CD4-positive, alpha-beta T cell (primary cell): ENCODE measurements at regions of chr16 and their contacts with region 1.

Region 1: DNA sequence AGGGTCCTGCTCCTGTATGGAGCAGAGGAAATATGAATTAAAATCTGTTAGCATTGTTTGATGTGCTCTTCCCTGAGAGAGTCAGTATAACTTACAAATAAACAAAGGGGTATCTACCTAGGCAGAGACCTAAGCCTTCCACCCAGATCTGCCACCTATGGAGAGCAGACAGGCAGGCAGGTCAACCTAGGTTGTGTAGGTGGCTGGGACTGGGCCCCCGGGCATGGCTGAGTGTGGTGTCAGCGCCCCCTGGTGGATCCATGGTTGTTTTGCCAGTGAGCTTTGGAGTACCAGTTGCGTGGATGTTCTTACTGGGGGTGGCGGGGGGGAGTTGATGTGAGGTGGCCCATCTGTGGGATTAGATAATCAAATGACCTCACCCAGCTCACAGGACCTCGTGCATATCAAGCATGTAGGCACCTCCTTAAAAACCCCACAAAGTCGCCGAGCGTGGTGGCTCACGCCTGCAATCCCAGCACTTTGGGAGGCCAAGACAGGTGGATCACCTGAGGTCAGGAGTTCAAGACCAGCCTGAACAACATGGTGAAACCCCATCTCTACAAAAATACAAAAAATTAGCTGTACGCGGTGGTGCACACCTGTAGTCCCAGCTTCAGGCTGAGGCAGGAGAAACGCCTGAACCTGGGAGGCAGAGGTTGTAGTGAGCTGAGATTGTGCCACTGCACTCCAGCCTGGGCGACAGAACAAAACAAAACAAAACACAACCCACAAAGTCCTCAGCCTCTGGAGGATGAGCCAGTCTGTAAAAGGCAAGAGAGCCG is 17.6 kb downstream of the DUS2 start:
- DNase-seq: peak; percentile 83 to 96 (median 91)
- ATAC-seq: peak; percentile 98
- H3K4me3 ChIP-seq: no peak overlapping the region
- H3K4me3 Mint-ChIP-seq: no peak overlapping the region
- H3K27ac ChIP-seq: no peak overlapping the region
- H3K27ac Mint-ChIP-seq: peak overlapping the region; percentile 57
- H3K4me1 ChIP-seq: peaks cover 14% of the 10 kb centered on the region
- H3K4me1 Mint-ChIP-seq: peaks cover 11% of the 10 kb centered on the region
- H3K27me3 ChIP-seq: no peaks in the 10 kb centered on the region
- H3K27me3 Mint-ChIP-seq: no peaks in the 10 kb centered on the region
- CTCF ChIP-seq: peak; percentile 82

Region 2: DNA sequence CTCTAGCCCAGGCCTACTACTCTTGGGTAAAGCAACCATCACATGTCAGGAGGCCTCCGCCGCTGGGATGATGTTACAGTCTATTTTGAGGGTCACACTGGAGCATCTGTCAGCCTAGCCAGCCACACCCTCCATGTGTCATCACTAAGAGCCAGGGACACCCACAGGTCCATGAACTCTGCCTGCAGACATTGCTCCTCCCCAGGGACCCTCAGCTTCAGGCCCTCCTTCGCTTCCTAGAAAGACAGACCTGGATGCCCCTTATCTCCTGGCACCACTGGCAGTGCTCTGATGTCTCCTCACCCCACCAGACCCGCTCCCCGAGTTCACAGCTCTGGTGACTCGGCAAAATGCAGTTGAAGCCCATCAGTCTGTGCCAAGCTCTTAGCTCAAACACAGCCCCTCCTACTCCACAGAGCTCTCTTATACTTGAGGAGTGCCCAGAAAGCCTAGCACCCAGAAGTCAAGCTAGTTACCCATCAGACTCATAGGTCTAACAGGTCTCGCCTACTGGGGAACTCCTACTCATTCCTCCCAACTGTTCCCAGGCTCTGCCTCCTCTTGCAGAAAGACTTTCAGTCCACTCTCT is 240.3 kb before region 1 on chr16:
- CTCF ChIA-PET with region 1: no interaction called
- POLR2A ChIA-PET with region 1: no interaction called
- intact Hi-C with region 1: no loop called
- DNase-seq: no peak
- ATAC-seq: no peak
- H3K4me3 ChIP-seq: no peak overlapping the region
- H3K4me3 Mint-ChIP-seq: no peak overlapping the region
- H3K27ac ChIP-seq: no peak overlapping the region
- H3K27ac Mint-ChIP-seq: peak overlapping the region; percentile 60
- H3K4me1 ChIP-seq: peaks cover 49% of the 10 kb centered on the region
- H3K4me1 Mint-ChIP-seq: peaks cover 78% of the 10 kb centered on the region
- H3K27me3 ChIP-seq: no peaks in the 10 kb centered on the region
- H3K27me3 Mint-ChIP-seq: no peaks in the 10 kb centered on the region
- CTCF ChIP-seq: no peak

Region 3: DNA sequence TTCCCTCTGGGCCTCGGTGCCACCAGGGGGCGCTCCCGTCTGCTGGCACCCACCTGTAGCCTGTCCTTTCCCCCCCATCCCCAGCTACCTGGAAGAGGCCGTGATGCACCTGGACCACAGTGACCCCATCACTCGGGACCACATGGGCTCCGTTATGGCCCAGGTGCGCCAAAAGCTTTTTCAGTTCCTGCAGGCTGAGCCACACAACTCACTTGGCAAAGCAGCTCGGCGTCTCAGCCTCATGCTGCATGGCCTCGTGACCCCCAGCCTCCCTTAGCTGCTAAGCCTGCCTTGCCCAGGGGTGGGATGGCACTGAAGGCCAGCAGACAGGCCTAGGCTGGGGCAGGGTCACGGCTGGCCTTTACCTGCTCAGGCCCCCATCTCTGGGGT is 156.8 kb before region 1 on chr16:
- CTCF ChIA-PET with region 1: interaction called, 16 read pairs
- POLR2A ChIA-PET with region 1: interaction called, 8 read pairs
- intact Hi-C with region 1: loop called (anchors 1 kb)
- DNase-seq: peak; percentile 60 to 85 (median 72)
- ATAC-seq: peak; percentile 88
- H3K4me3 ChIP-seq: no peak overlapping the region
- H3K4me3 Mint-ChIP-seq: no peak overlapping the region
- H3K27ac ChIP-seq: no peak overlapping the region
- H3K27ac Mint-ChIP-seq: no peak overlapping the region
- H3K4me1 ChIP-seq: no peaks in the 10 kb centered on the region
- H3K4me1 Mint-ChIP-seq: no peaks in the 10 kb centered on the region
- H3K27me3 ChIP-seq: no peaks in the 10 kb centered on the region
- H3K27me3 Mint-ChIP-seq: no peaks in the 10 kb centered on the region
- CTCF ChIP-seq: peak; percentile 91

Region 4: DNA sequence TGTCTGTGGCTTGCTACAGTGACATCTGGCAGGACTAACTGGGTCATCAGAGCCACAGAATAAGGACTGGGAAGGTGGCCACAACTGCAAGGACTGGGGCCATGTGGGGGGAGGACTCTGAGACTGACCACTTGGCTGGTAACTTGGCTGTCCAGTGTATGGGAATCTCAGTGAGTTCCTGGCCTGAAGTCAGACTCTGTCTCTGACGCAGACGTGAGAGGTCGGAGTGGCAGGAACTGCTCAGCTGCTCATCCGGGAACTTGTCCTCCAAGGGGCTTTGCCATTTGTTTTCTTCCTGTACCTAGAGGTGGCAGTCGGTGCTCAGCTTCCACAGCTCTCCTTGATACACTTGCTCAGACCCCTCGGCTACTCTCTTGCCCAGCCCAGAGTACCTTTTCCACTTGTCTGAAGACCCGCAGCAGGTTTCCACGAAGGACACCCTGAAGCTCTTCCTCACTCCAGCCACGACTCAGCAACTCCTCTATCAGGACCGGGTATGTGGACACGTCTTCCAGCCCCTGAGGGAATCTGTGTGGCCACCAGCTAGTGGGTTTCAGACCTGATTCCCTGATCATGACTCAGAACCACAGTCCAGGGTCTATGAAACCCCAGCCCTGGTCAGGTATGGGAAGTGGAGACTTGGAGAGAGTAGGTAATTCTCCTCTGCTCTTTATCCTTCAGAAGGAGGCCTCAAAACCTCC is 53.1 kb before region 1 on chr16:
- CTCF ChIA-PET with region 1: interaction called, 11 read pairs
- POLR2A ChIA-PET with region 1: interaction called, 7 read pairs
- intact Hi-C with region 1: no loop called
- DNase-seq: no peak
- ATAC-seq: no peak
- H3K4me3 ChIP-seq: no peak overlapping the region
- H3K4me3 Mint-ChIP-seq: no peak overlapping the region
- H3K27ac ChIP-seq: peak overlapping the region in 1 of 2 donors; percentile 32
- H3K27ac Mint-ChIP-seq: peak overlapping the region; percentile 79
- H3K4me1 ChIP-seq: peaks cover 29% of the 10 kb centered on the region
- H3K4me1 Mint-ChIP-seq: peaks cover 32% of the 10 kb centered on the region
- H3K27me3 ChIP-seq: no peaks in the 10 kb centered on the region
- H3K27me3 Mint-ChIP-seq: no peaks in the 10 kb centered on the region
- CTCF ChIP-seq: no peak

Region 5: GRCh38 chr16:67993189-67994039 is 47.3 kb before region 1 on chr16:
- CTCF ChIA-PET with region 1: interaction called, 33 read pairs
- POLR2A ChIA-PET with region 1: interaction called, 8 read pairs
- intact Hi-C with region 1: loop called (anchors 1 kb)
- DNase-seq: peak; percentile 69 to 93 (median 78)
- ATAC-seq: peak; percentile 91
- H3K4me3 ChIP-seq: peak overlapping the region; percentile 63
- H3K4me3 Mint-ChIP-seq: peak overlapping the region; percentile 89
- H3K27ac ChIP-seq: peak overlapping the region; percentile 76 to 90
- H3K27ac Mint-ChIP-seq: peak overlapping the region; percentile 93
- H3K4me1 ChIP-seq: peaks cover 55% of the 10 kb centered on the region
- H3K4me1 Mint-ChIP-seq: peaks cover 36% of the 10 kb centered on the region
- H3K27me3 ChIP-seq: no peaks in the 10 kb centered on the region
- H3K27me3 Mint-ChIP-seq: no peaks in the 10 kb centered on the region
- CTCF ChIP-seq: peak; percentile 92

Region 6: DNA sequence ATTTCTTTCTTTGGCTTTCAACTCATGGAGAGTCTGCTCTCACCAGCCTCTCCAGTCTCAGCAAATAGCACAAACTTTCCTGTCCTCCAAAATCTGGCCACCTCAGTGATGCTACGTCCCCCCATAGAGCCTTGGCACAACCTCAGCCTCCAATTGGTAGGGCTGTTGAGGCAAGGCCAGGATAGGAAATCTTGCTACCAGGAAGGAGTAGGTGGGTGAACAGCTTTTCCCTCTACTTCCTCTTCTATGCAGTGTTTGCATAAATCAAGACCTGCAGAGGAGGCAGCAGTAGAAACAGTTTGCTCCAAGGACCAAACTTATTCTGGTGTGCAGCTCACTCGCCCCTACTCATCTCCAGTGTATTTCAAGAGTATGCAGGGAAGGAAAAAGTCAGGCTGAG is 40.7 kb before region 1 on chr16:
- CTCF ChIA-PET with region 1: interaction called, 33 read pairs
- POLR2A ChIA-PET with region 1: interaction called, 9 read pairs
- intact Hi-C with region 1: no loop called
- DNase-seq: peak in 3 of 14 experiments; percentile 6 to 34 (median 22)
- ATAC-seq: peak; percentile 11
- H3K4me3 ChIP-seq: peak overlapping the region; percentile 61
- H3K4me3 Mint-ChIP-seq: peak overlapping the region; percentile 86
- H3K27ac ChIP-seq: peak overlapping the region; percentile 48 to 83
- H3K27ac Mint-ChIP-seq: peak overlapping the region; percentile 93
- H3K4me1 ChIP-seq: peaks cover 70% of the 10 kb centered on the region
- H3K4me1 Mint-ChIP-seq: peaks cover 55% of the 10 kb centered on the region
- H3K27me3 ChIP-seq: no peaks in the 10 kb centered on the region
- H3K27me3 Mint-ChIP-seq: no peaks in the 10 kb centered on the region
- CTCF ChIP-seq: no peak

Region 7: DNA sequence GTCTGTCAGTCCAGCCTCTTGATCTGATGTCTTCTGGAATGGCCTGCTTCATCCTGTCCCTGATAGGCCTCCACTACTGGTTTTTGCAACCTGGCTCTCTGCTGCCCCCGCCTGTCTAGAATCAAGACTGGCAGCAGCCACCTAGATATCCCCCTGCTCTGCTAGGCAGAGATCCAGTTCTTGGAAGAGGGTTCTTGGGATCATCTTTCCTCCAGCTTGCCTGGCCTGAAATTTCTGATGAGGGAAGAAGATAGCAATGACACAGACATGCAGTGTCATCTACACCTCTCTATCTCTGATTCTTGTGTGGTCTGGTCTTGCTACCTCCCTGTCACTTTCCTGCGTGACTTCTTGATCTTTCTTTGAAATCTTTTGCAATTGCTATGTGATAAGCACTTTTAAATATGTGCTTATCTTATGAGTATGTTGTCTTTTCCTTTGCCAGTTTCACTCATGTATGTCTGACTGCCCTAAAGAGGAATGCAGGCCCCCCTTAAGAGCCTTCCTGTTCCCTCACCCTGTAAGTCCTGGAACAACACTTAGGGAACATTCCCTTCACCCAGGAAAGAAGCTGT is 24.2 kb after region 1 on chr16:
- CTCF ChIA-PET with region 1: interaction called, 14 read pairs
- POLR2A ChIA-PET with region 1: interaction called, 5 read pairs
- intact Hi-C with region 1: no loop called
- DNase-seq: peak; percentile 55 to 82 (median 68)
- ATAC-seq: peak; percentile 83
- H3K4me3 ChIP-seq: no peak overlapping the region
- H3K4me3 Mint-ChIP-seq: peak overlapping the region; percentile 22
- H3K27ac ChIP-seq: peak overlapping the region in 1 of 2 donors; percentile 55
- H3K27ac Mint-ChIP-seq: peak overlapping the region; percentile 50
- H3K4me1 ChIP-seq: peaks cover 86% of the 10 kb centered on the region
- H3K4me1 Mint-ChIP-seq: peaks cover 84% of the 10 kb centered on the region
- H3K27me3 ChIP-seq: no peaks in the 10 kb centered on the region
- H3K27me3 Mint-ChIP-seq: no peaks in the 10 kb centered on the region
- CTCF ChIP-seq: peak; percentile 87

Region 8: DNA sequence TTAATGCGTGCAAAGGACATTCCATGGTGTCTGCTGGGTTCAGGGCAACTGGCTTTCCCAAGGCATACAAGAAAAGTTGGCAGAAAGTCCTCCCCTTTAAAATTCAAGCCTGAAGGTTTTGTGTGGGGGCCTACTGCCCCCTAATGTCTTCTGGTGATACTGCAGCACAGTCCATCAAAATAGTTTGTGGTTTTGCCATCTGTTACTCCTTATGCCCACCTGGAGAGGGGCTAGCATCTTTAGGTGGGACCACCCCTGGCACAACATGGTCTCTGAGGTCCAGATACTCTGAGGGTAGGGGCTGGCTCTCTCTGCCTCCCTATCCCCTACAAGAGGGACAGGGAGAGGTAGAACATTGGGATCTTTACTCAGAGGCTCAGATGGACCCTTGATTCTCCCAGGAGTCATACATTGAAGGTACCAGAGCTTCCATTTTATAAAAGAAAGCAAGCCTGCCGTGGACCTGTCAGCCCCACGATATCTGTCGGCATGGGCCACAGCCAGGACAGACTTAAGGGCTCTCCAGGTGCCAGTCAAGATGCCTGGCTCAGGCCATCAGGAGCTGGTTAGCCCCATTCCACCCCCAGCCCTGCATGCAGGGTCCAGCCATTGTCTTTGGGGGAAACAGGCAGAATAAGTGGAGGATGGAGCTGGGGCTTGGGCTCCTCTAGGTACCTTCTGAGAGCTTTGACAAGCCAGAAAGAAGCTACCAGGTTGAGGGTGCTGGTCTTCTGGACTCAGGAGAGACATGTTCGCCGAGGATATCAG is 188.9 kb after region 1 on chr16:
- CTCF ChIA-PET with region 1: no interaction called
- POLR2A ChIA-PET with region 1: no interaction called
- intact Hi-C with region 1: loop called in 1 of 2 experiments (anchors 1 kb)
- DNase-seq: peak in 11 of 14 experiments; percentile 28 to 72 (median 46)
- ATAC-seq: peak; percentile 61
- H3K4me3 ChIP-seq: no peak overlapping the region
- H3K4me3 Mint-ChIP-seq: no peak overlapping the region
- H3K27ac ChIP-seq: no peak overlapping the region
- H3K27ac Mint-ChIP-seq: peak overlapping the region; percentile 67
- H3K4me1 ChIP-seq: peaks cover 23% of the 10 kb centered on the region
- H3K4me1 Mint-ChIP-seq: peaks cover 40% of the 10 kb centered on the region
- H3K27me3 ChIP-seq: no peaks in the 10 kb centered on the region
- H3K27me3 Mint-ChIP-seq: no peaks in the 10 kb centered on the region
- CTCF ChIP-seq: peak; percentile 95

Region 9: GRCh38 chr16:68244903-68245853 is 204.5 kb after region 1 on chr16 and contains the start of gene PLA2G15:
- CTCF ChIA-PET with region 1: no interaction called
- POLR2A ChIA-PET with region 1: no interaction called
- intact Hi-C with region 1: no loop called
- DNase-seq: peak; percentile 94 to 99 (median 96)
- ATAC-seq: peak; percentile 99
- H3K4me3 ChIP-seq: peak within 1 kb of the TSS; percentile 94
- H3K4me3 Mint-ChIP-seq: peak within 1 kb of the TSS; percentile 99
- H3K27ac ChIP-seq: peak within 1 kb of the TSS in 1 of 2 donors; percentile 21
- H3K27ac Mint-ChIP-seq: peak within 1 kb of the TSS; percentile 50
- H3K4me1 ChIP-seq: peaks cover 29% of the 10 kb centered on the region
- H3K4me1 Mint-ChIP-seq: peaks cover 17% of the 10 kb centered on the region
- H3K27me3 ChIP-seq: no peaks in the 10 kb centered on the region
- H3K27me3 Mint-ChIP-seq: no peaks in the 10 kb centered on the region
- CTCF ChIP-seq: no peak
- total RNA-seq, gene PLA2G15: 4.3 to 4.7 TPM